ENCODE measurements at regions of chr1 and their contacts with region 1.

Region 1: DNA sequence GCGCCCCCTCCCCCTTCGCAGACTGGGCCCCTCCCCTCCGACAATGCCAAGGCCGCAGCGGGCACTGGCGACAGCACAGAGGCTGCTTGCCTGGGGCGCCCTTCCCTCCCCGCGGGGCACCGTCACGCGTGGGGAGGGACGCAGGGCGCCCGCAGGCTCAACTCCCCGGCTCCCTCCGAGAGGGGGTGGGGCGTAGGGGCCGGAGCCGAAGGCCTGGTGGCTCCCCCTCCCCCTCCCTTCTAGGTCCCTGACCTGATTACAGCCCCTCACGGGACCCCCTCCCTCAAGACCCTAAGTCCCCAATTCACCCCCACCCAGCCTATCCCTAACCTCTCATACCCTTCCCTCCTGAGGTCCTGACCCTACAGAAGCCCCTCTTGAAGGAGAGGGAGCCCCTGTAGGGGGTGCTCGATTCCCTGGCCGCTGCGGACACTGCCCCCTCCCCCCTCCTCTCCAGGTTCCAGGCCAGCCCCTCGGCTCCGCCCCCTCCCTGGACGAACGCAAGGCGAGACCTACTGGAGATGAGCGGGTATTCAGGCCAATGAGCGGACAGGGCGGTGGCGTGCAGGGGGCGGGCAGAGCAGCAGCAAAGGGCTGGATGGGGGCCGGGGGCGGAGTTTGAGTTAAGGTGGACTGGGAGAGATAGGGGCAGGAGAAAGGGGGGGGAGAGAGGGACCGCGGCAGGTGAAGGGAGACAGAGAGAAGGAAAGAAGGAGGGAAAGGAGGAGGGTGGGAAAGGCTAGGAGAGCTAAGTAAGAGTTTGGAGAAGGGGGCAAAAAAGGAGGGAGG is 733 bp upstream of the ZBTB7B start:
- DNase-seq: peak; percentile 100
- ATAC-seq: peak; percentile 92
- H3K4me3 ChIP-seq: peak overlapping the region; percentile 46 to 65
- H3K27ac ChIP-seq: peak overlapping the region; percentile 15 to 87
- H3K4me1 ChIP-seq: peaks cover 0 to 2% of the 10 kb centered on the region in 2 donors
- H3K27me3 ChIP-seq: no peaks in the 10 kb centered on the region

Region 2: DNA sequence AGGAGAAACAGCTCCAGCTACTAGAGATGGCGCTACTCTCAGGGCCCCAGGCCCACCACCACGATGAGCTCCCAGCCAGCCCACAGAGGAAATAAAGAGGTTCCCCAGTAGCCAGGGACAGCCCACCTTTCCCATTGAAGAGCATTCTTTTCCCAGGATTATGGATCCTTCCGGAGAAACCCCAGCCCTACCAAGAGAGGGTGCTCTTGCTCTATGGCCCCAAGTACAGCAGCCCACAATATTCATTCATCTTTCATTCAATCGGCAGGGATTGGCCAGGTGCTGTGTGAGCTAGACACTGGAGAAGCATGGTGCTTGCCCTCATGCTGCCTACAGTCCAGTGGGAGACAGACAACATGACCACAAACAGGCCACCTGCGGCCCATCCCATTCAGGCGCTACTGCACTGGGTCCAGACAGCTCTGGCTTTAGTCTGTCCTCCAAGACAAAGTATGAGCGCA is 95.2 kb before region 1 on chr1:
- intact Hi-C with region 1: no loop called
- DNase-seq: no peak
- ATAC-seq: peak; percentile 26
- H3K4me3 ChIP-seq: no peak overlapping the region
- H3K27ac ChIP-seq: no peak overlapping the region
- H3K4me1 ChIP-seq: no peaks in the 10 kb centered on the region
- H3K27me3 ChIP-seq: no peaks in the 10 kb centered on the region

Region 3: DNA sequence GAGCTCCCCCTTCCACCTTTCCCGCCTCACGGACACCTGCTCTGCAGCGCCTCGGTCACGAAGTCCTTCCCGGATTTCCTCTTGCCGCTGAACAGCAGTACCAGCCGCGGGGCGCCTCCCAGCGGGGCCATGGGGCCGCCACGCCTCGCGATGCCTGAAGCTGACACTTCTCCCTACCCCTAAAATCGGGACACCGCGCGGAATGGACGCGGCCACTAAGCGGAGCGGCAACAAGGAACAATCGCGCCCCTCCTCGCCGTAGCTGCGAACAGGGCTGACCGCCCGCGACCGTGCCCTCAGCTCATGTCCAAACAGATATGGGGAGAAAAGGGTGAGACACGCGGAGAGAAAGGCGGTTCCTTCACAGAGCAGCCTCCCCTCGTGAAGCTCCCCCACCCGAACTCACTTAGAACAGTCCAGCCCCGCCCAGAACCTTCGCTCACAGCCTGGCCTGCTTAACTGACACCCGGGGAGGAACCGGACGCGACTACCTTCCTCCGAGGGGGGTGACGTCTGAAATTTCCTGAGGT is 65.2 kb before region 1 on chr1 and contains the start of gene PMVK:
- intact Hi-C with region 1: loop called in 1 of 2 experiments (anchors 5 kb)
- DNase-seq: peak; percentile 97
- ATAC-seq: peak; percentile 97
- H3K4me3 ChIP-seq: peak within 1 kb of the TSS; percentile 42 to 51
- H3K27ac ChIP-seq: peak within 1 kb of the TSS; percentile 68 to 95
- H3K4me1 ChIP-seq: no peaks in the 10 kb centered on the region
- H3K27me3 ChIP-seq: no peaks in the 10 kb centered on the region
- total RNA-seq, gene PMVK: 21.9 to 27.3 TPM

Region 4: GRCh38 chr1:154961497-154962262 is 40.2 kb before region 1 on chr1 and contains the start of gene PYGO2:
- intact Hi-C with region 1: loop called in 1 of 2 experiments (anchors 2 kb)
- DNase-seq: peak; percentile 86 to 95
- ATAC-seq: peak; percentile 92
- H3K4me3 ChIP-seq: peak within 1 kb of the TSS; percentile 29 to 72
- H3K27ac ChIP-seq: peak within 1 kb of the TSS; percentile 12 to 70
- H3K4me1 ChIP-seq: no peaks in the 10 kb centered on the region
- H3K27me3 ChIP-seq: no peaks in the 10 kb centered on the region
- total RNA-seq, gene PYGO2: 17.3 to 23.6 TPM

Region 5: DNA sequence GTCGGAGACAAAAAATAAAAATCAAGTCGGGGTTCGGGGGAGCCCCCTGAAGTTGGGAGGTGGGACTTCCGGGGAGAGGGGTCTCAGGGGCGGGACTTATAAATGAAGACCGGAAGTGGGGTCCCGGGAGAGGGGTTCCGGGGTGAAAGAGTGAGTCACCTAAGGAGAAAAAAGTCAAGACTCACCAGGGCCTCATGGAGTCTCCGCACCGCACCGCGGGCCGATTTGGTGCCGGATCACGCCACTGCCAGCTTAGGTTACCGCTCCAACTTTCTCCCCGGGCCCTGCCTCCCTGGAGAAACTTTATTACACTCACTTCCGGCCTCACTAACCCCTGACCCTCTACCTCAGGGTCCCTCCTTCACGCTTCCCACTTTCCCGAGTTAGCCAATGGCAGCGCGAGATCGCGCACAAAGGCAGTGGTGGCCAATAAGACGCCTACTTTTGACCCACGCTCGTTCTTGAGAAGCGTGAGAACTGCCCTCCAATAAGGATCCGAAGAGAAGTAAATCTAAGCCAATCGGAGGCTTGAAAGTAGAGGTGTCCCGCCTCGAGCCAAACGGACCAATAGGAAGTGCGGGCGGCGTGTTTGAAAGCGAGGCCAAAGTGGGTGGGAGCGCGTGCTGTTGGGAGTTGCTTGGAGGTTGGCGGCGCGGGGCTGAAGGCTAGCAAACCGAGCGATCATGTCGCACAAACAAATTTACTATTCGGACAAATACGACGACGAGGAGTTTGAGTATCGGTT is 27.6 kb before region 1 on chr1 and contains the start of gene CKS1B:
- intact Hi-C with region 1: loop called in 1 of 2 experiments (anchors 1 kb)
- DNase-seq: peak; percentile 98
- ATAC-seq: peak; percentile 92
- H3K4me3 ChIP-seq: peak within 1 kb of the TSS; percentile 81 to 89
- H3K27ac ChIP-seq: peak within 1 kb of the TSS; percentile 72 to 86
- H3K4me1 ChIP-seq: no peaks in the 10 kb centered on the region
- H3K27me3 ChIP-seq: no peaks in the 10 kb centered on the region
- total RNA-seq, gene CKS1B: 19.3 to 25.5 TPM

Region 6: DNA sequence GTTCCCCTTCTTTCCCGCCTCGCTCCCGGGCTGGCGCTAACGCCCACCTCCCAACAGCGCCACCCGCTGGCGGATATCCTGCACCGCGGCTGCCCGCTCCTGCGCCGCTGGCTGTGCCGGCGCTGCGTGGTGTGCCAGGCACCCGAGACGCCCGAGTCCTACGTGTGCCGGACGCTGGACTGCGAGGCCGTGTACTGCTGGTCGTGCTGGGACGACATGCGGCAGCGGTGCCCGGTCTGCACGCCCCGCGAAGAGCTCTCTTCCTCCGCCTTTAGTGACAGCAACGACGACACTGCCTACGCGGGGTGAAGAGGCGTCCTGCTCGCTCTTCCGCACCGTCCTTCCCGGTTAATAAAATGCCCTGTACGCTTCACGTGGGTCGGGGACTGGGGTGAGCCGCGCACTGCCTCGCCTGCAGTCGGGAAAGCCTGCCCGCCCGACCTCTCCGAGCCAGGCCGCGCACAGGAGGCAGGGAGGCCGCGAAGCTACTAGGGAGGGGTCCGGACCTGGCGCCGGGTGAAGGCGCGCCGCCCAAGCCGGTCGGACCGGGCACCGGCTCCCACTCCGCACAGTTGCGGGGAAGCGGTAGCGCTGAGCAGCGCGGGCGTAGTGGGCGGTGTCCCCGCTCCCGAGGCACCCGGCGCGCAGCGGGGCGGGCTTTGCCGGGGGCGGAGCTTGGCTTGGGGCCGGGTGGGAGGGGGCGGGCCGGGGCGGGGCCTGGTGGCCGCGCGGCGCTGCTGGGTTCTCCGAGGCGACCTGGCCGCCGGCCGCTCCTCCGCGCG is 48.9 kb after region 1 on chr1 and contains the start of gene ADAM15:
- intact Hi-C with region 1: no loop called
- DNase-seq: peak; percentile 93 to 96
- ATAC-seq: peak; percentile 92
- H3K4me3 ChIP-seq: peak within 1 kb of the TSS; percentile 44 to 67
- H3K27ac ChIP-seq: peak within 1 kb of the TSS in 1 of 2 donors; percentile 65
- H3K4me1 ChIP-seq: no peaks in the 10 kb centered on the region
- H3K27me3 ChIP-seq: no peaks in the 10 kb centered on the region
- total RNA-seq, gene ADAM15: 129 to 180 TPM

Region 7: GRCh38 chr1:155063550-155064110 is 61.8 kb after region 1 on chr1 and contains the start of gene EFNA4:
- intact Hi-C with region 1: loop called in 1 of 2 experiments (anchors 5 kb)
- DNase-seq: peak; percentile 92 to 94
- ATAC-seq: peak; percentile 90
- H3K4me3 ChIP-seq: peak within 1 kb of the TSS; percentile 40 to 54
- H3K27ac ChIP-seq: no peak within 1 kb of the TSS
- H3K4me1 ChIP-seq: no peaks in the 10 kb centered on the region
- H3K27me3 ChIP-seq: no peaks in the 10 kb centered on the region
- total RNA-seq, gene EFNA4: 3.0 to 5.7 TPM

Region 8: DNA sequence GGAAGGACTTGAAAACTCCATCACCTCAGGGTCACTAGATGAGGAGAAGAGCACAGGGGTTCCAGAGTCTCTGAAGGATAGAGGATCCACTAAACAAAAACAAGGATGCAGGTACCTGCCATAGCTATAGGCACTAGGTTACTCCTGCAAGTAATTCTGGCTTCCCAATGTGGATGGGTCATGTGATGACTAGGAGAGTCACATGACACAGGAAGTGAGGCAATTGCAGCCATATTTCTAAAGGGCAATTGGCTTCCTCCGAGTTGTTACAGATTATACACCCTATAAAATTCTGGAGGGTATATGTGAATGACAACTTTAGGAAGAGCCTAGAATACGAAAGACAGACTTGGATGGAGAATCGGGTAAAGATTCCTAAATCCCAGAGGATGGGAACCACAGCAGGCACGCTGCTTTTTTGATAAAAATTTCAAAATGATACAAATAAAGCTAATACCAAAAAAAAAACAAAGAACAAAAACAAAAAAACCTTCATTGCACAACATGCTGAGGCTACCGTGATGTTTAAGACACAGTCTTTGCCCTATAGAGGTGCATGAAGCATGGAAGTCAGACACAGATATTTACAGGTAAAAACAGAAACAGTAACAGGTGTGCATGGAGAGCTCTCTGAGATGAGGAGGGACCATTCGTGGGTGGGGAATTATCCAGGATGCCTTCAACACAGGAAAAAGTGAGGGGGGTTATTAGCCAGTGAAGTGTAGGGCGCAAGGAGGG is 217.2 kb after region 1 on chr1:
- intact Hi-C with region 1: no loop called
- DNase-seq: no peak
- ATAC-seq: peak; percentile 67
- H3K4me3 ChIP-seq: no peak overlapping the region
- H3K27ac ChIP-seq: no peak overlapping the region
- H3K4me1 ChIP-seq: no peaks in the 10 kb centered on the region
- H3K27me3 ChIP-seq: no peaks in the 10 kb centered on the region

Region 9: DNA sequence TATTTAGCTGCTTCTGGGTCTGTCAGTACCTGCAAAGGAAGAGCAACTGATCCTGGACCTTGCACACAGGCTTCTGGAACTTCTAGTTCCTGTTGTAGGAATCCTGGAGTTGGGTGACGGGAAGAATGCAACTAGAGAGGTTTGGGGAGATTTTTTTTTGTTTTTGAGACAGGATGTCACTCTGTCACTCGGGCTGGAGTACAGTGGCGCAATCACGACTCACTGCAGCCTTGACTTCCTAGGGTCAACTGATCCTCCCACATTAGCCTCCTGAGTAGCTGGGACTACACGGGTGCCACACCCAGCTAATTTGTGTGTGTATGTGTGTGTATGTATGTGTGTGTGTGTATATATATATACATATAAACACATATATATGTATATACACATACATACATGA is 234.6 kb after region 1 on chr1:
- intact Hi-C with region 1: no loop called
- DNase-seq: no peak
- ATAC-seq: no peak
- H3K4me3 ChIP-seq: no peak overlapping the region
- H3K27ac ChIP-seq: no peak overlapping the region
- H3K4me1 ChIP-seq: no peaks in the 10 kb centered on the region
- H3K27me3 ChIP-seq: no peaks in the 10 kb centered on the region